Heart left ventricle (tissue), 16 donors: ENCODE measurements at regions of chr6 and their contacts with region 1.

Region 1: DNA sequence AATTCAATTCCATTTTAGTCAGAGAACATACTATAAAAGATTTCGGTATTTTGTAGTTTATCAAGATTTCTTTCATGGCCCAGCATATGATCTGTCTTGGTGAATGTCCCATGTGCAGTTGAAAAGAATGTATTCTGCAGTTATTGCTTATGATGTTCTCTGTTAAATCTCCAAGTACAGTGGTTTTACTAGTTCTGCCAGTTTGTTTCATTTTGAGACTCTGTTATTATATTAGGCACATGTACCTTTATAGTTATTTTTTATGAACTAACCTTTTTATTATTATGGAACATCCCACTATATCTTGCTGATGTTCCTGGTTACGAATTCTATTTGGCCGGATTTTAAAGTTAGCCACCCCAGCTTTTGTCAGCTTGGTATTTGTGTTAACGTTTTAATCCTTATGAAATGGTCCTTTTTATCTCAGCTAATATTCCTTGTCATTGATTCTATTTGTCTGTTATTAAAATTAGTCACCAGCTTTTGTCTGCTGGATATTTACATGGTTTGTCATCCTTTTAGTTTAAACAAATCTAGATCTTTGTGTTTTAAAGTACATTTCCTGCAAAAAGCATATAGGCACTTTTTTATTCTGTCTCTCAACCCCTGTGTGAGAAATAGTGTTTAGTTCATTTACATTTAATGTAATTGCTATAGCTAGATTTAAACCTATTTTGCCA is 48.9 kb downstream of the VTA1 start:
- DNase-seq: no peak
- ATAC-seq: no peak
- H3K4me3 ChIP-seq: no peak overlapping the region
- H3K27ac ChIP-seq: no peak overlapping the region
- H3K4me1 ChIP-seq: peaks cover 0 to 12% (median 0%) of the 10 kb centered on the region in 12 donors
- H3K27me3 ChIP-seq: no peaks in the 10 kb centered on the region
- CTCF ChIP-seq: no peak
- POLR2A ChIP-seq: no peak

Region 2: GRCh38 chr6:142162780-142163179 is 33.2 kb before region 1 on chr6:
- intact Hi-C with region 1: loop called in 1 of 10 experiments (anchors 5 kb)
- DNase-seq: no peak
- ATAC-seq: no peak
- H3K4me3 ChIP-seq: no peak overlapping the region
- H3K27ac ChIP-seq: no peak overlapping the region
- H3K4me1 ChIP-seq: peaks cover 0 to 25% (median 9%) of the 10 kb centered on the region in 12 donors
- H3K27me3 ChIP-seq: no peaks in the 10 kb centered on the region
- CTCF ChIP-seq: no peak
- POLR2A ChIP-seq: no peak